ENCODE measurements at regions of chr1 and their contacts with region 1.

Region 1: DNA sequence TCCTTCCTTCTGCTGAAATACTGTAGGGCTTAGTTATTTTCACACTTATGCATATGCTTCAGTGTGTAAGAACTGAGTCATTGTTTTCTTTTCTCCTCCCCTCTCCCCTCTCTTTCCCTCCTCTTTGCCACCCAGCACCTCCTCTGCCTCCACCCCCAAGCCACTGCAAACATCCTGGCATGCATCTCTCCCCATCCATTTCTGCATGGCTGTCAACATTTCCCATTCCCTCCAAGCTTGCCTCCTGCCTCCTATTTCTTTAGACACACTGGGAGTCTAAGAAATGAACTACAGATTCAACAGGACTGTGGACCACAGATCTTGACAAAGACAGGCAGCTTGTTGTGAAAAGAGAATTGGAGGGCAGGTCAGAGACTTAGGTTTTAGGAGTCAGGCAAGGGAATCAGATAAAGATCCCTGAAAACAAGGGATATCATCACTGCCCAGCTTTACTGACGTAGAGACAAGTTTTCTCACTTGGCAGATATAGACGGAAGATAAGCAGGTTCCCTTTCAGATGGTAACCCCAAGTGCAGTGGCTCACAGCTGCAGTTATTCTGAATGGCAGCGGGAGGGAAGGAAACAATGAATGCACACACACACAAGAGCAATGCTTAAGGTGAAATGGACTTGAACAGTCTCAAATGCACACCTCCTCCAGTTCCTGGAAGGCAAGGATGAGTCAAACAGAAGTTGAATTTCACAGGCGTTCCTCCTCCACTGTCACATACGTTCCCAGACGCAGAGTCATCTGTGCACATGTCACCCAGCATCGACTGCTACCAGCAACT is 56.1 kb downstream of the HIVEP3 start:
- DNase-seq: peak; percentile 51
- H3K4me3 Mint-ChIP-seq: peak overlapping the region; percentile 50
- H3K27ac Mint-ChIP-seq: peak overlapping the region; percentile 90
- H3K4me1 Mint-ChIP-seq: peaks cover 47% of the 10 kb centered on the region
- H3K27me3 Mint-ChIP-seq: no peaks in the 10 kb centered on the region

Region 2: DNA sequence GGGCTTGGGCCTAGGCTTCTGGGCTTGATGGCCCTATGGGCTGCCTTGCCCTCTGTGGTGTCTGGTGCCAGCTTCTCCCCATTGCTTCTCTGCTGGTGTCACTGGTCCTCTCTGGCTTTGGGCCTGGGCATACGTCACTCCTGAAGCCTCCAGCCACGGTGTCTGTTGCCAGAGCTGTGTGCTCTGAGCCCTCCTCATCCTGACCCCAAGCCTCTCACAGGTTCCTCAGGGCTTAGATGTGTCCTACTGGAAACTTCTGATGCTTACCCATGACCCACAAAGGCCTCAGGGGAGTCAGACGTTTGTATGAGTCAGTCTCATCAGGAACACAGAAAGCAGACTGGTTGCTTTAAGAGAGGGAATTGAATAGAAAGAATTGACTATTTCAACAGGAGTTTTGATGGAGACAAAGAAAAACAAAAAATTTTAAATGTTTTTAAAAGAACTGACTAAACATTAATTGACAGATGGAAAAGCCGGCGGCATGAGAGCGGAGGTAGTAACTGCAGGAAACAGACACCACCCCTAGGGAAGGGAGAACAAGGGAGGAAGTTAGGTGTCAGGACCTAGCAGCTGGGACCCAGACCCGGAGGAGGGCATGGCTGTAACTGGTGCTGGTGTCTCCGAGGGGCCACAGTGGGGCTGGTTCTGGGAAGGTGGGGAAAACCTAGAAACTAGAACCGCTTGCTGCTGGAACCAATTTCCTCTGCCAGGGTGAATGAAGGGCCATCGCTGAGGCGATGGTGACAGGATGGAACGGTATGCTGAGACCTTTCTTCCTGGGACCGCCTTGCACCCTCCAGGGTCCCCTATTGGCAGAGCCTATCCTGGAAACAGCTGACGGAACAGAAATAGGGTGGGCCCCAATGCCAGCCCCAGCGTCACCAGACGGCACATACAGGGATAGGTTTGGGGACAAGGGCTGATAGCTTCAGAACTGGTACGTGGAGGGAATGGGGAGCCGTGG is 960.4 kb before region 1 on chr1:
- intact Hi-C with region 1: no loop called
- DNase-seq: no peak
- H3K4me3 Mint-ChIP-seq: no peak overlapping the region
- H3K27ac Mint-ChIP-seq: no peak overlapping the region
- H3K4me1 Mint-ChIP-seq: peaks cover 13% of the 10 kb centered on the region
- H3K27me3 Mint-ChIP-seq: peaks cover 7% of the 10 kb centered on the region

Region 3: GRCh38 chr1:41516168-41517061 is 346.2 kb before region 1 on chr1:
- intact Hi-C with region 1: loop called (anchors 5 kb)
- DNase-seq: peak; percentile 55
- H3K4me3 Mint-ChIP-seq: no peak overlapping the region
- H3K27ac Mint-ChIP-seq: no peak overlapping the region
- H3K4me1 Mint-ChIP-seq: peaks cover 6% of the 10 kb centered on the region
- H3K27me3 Mint-ChIP-seq: no peaks in the 10 kb centered on the region

Region 4: GRCh38 chr1:41728403-41729202 is 134.0 kb before region 1 on chr1:
- intact Hi-C with region 1: loop called (anchors 2 kb)
- DNase-seq: peak; percentile 47
- H3K4me3 Mint-ChIP-seq: peak overlapping the region; percentile 34
- H3K27ac Mint-ChIP-seq: peak overlapping the region; percentile 84
- H3K4me1 Mint-ChIP-seq: peaks cover 39% of the 10 kb centered on the region
- H3K27me3 Mint-ChIP-seq: peaks cover 1% of the 10 kb centered on the region

Region 5: DNA sequence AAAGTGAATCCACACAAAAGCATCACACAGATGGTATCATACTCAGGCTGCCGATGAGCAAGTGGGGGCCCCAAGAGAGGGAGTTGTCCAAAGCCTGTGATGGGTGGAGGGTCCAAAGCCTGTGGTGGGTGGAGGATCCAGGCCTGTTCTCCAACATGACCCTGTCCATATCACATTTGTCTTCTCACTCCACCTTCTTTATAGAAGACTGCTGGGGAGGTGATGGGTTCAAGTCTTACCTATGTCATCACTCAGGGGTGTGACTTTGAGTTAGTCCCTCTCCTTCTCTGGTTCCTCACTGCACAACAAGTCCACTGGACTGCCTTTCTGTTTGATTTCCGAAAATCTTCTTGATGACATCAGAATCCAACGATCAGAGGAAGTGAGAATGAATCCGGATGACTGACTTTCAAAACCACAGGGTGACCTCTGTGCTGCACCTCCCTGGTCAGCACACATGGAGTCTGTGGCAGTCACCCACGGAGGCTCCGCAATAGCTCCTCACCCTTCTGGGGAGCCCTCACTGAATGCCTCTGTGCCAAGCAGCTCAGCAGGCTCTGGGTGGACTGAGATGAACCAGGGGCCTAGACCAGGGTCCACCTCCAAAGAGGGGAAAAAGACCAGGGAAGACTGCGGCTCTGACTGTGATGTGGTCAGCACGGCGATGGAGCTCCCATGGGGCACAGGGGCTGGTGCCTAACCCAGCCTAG is 110.6 kb before region 1 on chr1:
- intact Hi-C with region 1: loop called (anchors 1 kb)
- DNase-seq: no peak
- H3K4me3 Mint-ChIP-seq: peak overlapping the region; percentile 48
- H3K27ac Mint-ChIP-seq: peak overlapping the region; percentile 81
- H3K4me1 Mint-ChIP-seq: peaks cover 90% of the 10 kb centered on the region
- H3K27me3 Mint-ChIP-seq: no peaks in the 10 kb centered on the region

Region 6: GRCh38 chr1:41802532-41803501 is 59.8 kb before region 1 on chr1:
- intact Hi-C with region 1: loop called (anchors 2 kb)
- DNase-seq: peak; percentile 40
- H3K4me3 Mint-ChIP-seq: peak overlapping the region; percentile 37
- H3K27ac Mint-ChIP-seq: peak overlapping the region; percentile 92
- H3K4me1 Mint-ChIP-seq: peaks cover 89% of the 10 kb centered on the region
- H3K27me3 Mint-ChIP-seq: no peaks in the 10 kb centered on the region

Region 7: GRCh38 chr1:41898191-41898713 is 35.7 kb after region 1 on chr1:
- intact Hi-C with region 1: loop called (anchors 1 kb)
- DNase-seq: peak; percentile 77
- H3K4me3 Mint-ChIP-seq: peak overlapping the region; percentile 78
- H3K27ac Mint-ChIP-seq: peak overlapping the region; percentile 94
- H3K4me1 Mint-ChIP-seq: peaks cover 86% of the 10 kb centered on the region
- H3K27me3 Mint-ChIP-seq: no peaks in the 10 kb centered on the region

Measured in activated T-helper 1 cell treated with anti-CD3 and anti-CD28 coated beads, Interleukin-12 subunit alpha, Interleukin-12 subunit beta, Interleukin-2, Interleukin-4 antibody, amounts not matched to agents 30 ng/mL and 10 ng/mL and 1 ng/mL, durations not matched to agents 14 hours and 24 hours and 36 hours (primary cell).